Activated B cell treated with CpG ODN at 0.5 μM for 24 hours (primary cell): ENCODE measurements at regions of chr2 and their contacts with region 1.

Region 1: GRCh38 chr2:202265467-202266277 is at the start of gene NOP58:
- DNase-seq: peak; percentile 78
- ATAC-seq: peak; percentile 87
- H3K4me3 Mint-ChIP-seq: peak within 1 kb of the TSS; percentile 38
- H3K27ac Mint-ChIP-seq: no peak within 1 kb of the TSS
- H3K4me1 Mint-ChIP-seq: peaks cover 30% of the 10 kb centered on the region
- H3K27me3 Mint-ChIP-seq: no peaks in the 10 kb centered on the region
- CTCF ChIP-seq: no peak
- total RNA-seq, gene NOP58: 141 and 153 TPM in 2 replicates

Region 2: DNA sequence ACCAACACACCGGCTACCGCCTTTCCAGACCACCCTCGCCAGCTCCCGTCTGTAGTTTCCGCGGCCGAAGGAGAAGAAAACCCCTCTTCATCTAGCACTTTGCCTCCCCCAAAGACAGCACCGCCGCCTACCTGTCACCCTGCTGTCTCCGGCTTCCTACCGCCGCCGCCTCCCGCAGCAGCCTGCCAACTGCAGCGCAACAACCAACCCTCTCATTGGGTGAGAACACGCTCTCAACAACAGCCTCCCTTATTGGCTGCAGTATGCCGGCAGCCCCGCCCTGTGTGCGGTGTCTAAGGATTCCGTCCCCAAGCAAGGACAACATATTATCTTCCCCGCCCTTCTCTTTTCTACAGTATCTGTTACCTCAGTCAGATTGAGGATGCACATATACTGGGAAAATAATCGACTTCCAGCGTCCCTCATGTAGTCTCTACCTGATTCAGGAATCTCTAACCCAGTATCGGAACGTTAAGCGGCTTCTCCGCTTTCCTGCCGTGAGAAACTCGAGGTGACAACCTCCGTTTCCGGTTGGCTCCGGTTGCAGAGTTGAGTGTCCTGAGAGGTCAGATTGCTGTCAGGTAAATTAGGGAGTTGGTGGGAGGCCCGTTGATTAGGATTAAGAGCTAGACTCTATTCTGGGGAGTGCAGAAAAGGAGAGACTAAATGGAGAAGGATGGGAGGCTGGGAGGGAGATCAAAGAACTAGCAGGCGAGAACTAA is 1194.0 kb before region 1 on chr2 and contains the starts of genes HYCC2 and NDUFB3:
- CTCF ChIA-PET with region 1: no interaction called
- POLR2A ChIA-PET with region 1: no interaction called
- intact Hi-C with region 1: loop called (anchors 5 kb)
- DNase-seq: peak; percentile 77
- ATAC-seq: peak; percentile 96
- H3K4me3 Mint-ChIP-seq: peak within 1 kb of the TSS; percentile 98
- H3K27ac Mint-ChIP-seq: peak within 1 kb of the TSS; percentile 96
- H3K4me1 Mint-ChIP-seq: peaks cover 50% of the 10 kb centered on the region
- H3K27me3 Mint-ChIP-seq: no peaks in the 10 kb centered on the region
- CTCF ChIP-seq: no peak
- total RNA-seq, gene HYCC2: 32.0 and 39.6 TPM in 2 replicates
- total RNA-seq, gene NDUFB3: 85.4 and 94.2 TPM in 2 replicates

Region 3: DNA sequence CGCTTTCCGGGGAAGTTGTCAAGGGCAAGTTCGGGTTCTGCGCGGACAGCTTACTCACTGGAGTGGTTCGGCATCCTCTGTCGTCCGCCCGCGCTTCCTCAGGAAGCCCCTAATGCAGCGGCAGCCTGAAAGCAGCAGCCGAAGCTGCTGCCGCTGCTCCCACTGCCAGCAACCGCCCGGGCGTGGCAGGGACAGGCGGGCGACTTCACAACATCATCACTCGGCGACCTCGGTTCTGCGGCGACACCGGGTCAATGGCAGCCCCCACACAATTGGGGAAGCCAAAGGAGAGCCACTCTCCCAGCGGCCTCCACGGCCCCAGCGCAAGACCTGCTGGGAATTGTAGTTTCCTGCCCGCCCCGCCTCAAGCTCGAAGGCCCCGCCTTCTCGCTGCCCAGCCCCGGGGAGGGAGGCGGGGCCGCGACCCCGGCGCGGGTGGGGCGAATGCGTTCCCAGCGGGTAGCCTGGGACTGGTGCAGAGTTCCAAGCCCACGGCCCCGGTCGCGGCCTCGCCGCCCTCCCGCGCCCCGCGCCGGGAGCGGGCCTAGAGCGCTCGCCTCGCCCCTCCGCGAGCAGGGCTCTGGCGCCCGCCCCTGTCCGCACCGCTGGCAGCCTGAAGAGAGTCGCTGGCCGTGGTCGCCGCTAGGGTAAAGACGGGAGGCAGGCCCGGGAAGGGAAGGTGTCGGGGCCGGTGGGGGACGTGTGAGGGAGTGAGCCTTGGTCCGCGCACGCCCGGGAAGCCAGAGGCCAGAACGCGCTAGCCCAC is 814.2 kb before region 1 on chr2 and contains the starts of genes STRADB and TRAK2:
- CTCF ChIA-PET with region 1: no interaction called
- POLR2A ChIA-PET with region 1: interaction called, 7 read pairs
- intact Hi-C with region 1: loop called (anchors 1 kb)
- DNase-seq: peak; percentile 89
- ATAC-seq: peak; percentile 93
- H3K4me3 Mint-ChIP-seq: peak within 1 kb of the TSS; percentile 97
- H3K27ac Mint-ChIP-seq: peak within 1 kb of the TSS; percentile 95
- H3K4me1 Mint-ChIP-seq: peaks cover 51% of the 10 kb centered on the region
- H3K27me3 Mint-ChIP-seq: no peaks in the 10 kb centered on the region
- CTCF ChIP-seq: no peak
- total RNA-seq, gene STRADB: 17.8 and 23.3 TPM in 2 replicates
- total RNA-seq, gene TRAK2: 17.7 and 20.1 TPM in 2 replicates

Region 4: GRCh38 chr2:202221873-202222272 is 43.8 kb before region 1 on chr2:
- CTCF ChIA-PET with region 1: no interaction called
- POLR2A ChIA-PET with region 1: interaction called, 12 read pairs
- intact Hi-C with region 1: no loop called
- DNase-seq: no peak
- ATAC-seq: no peak
- H3K4me3 Mint-ChIP-seq: no peak overlapping the region
- H3K27ac Mint-ChIP-seq: no peak overlapping the region
- H3K4me1 Mint-ChIP-seq: peaks cover 12% of the 10 kb centered on the region
- H3K27me3 Mint-ChIP-seq: no peaks in the 10 kb centered on the region
- CTCF ChIP-seq: no peak

Region 5: DNA sequence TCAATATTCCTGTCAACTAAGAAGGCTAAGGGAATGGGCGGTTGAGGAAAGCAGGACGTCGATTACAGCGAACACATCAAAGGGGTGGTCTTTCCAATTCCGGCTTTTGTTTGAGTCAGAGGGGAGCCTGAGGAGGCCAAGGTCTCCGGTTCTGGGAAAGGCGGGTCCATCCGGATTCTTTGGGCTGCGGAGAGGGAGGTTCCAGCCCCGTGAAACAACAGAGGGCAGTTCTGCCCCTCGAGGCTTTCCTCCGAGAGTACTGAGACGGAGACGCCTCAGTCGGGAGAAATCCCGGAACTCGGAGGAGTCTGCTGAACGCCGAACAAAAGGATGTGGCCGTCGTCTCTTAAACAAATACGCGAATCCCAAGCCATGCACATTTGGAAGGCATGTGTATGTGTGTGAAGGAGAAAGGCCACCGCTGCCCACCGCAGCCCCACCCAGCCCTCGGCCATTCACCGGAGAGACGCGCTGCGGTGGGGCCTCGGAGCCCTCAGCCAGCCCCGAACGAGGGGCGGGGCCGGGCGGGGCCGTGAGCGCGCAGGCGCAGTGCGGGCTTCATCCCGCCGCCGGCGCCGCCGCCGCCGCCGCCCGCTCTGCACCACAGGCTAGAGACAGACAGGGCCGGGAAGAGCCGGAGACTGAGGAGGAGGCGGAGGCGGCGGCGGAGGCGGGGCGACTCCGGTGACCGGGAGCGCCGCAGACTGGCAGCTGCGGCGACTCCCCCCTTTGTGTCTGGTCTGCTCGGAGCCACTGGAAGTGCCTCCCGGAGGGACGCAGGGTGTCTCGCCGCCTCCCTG is 110.1 kb after region 1 on chr2 and contains the start of gene BMPR2:
- CTCF ChIA-PET with region 1: no interaction called
- POLR2A ChIA-PET with region 1: interaction called, 3 read pairs
- intact Hi-C with region 1: loop called (anchors 1 kb)
- DNase-seq: peak; percentile 88
- ATAC-seq: peak; percentile 79
- H3K4me3 Mint-ChIP-seq: peak within 1 kb of the TSS; percentile 98
- H3K27ac Mint-ChIP-seq: peak within 1 kb of the TSS; percentile 87
- H3K4me1 Mint-ChIP-seq: peaks cover 24% of the 10 kb centered on the region
- H3K27me3 Mint-ChIP-seq: no peaks in the 10 kb centered on the region
- CTCF ChIP-seq: no peak
- total RNA-seq, gene BMPR2: 16.5 and 16.8 TPM in 2 replicates

Region 6: DNA sequence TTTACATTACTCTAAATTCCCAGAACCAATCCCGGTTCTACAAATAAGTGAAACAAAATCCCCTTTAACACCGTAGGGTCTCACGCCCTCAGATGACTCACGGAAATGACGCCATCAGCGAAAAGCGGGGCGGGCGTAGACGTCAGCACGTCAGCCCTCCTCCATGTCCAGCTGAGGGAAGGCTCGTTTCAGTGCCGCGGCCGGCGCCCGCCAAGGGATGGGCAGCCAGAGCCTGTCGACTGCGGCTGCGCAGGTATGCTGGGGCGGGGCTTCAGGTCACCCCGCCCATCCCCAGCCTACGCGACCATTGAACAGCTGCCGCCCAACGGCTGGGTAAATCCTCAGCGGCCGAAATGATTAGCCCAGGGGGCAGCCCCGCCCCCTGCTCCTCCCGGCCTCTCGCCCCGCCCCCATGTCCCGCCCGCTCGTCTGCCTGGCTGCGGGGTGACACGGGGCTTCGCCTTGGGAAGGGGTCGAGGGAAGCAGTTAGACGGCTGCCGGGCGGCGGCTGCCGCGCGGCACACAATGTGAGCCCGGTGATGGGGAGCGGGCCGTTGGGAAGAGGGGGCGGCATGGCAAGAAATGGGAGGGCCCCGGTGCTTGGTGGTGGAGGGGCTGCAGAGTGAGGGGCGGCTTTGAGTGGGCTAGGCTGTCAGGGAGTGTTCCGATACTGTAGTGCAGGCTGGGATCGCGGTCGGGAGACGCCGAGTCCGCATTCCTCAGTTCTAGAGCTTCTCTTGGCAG is 749.0 kb after region 1 on chr2 and contains the start of gene NBEAL1:
- CTCF ChIA-PET with region 1: no interaction called
- POLR2A ChIA-PET with region 1: no interaction called
- intact Hi-C with region 1: loop called (anchors 5 kb)
- DNase-seq: peak; percentile 100
- ATAC-seq: peak; percentile 93
- H3K4me3 Mint-ChIP-seq: peak within 1 kb of the TSS; percentile 87
- H3K27ac Mint-ChIP-seq: peak within 1 kb of the TSS; percentile 84
- H3K4me1 Mint-ChIP-seq: peaks cover 26% of the 10 kb centered on the region
- H3K27me3 Mint-ChIP-seq: no peaks in the 10 kb centered on the region
- CTCF ChIP-seq: no peak
- total RNA-seq, gene NBEAL1: 8.9 and 9.3 TPM in 2 replicates